Psoas muscle (tissue), 8 donors: ENCODE measurements at regions of chr12 and their contacts with region 1.

Region 1: DNA sequence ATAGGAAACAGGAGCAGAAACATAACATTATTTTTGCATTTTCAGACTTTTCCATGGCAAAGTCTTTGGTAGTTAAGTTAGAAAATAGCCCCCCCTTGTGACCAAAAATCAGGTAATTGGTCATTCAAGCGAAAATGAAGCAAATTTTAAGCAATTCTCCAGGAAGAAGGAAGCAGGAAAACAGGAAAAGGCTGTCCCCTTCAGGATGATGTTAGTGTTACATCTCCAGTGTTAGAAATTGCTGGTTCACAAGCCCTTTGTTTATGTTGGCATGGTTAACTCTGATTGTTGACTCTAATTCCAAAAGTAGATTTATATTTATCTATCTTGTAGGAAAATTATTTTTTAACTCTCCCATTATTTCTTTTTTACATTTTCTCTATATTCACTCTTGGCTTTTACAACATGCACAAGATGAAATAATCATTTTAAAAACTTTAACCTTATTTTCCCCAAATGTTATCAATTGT is 18.8 kb upstream of the GAS2L3 start:
- DNase-seq: no peak
- ATAC-seq: peak in 1 of 4 donors; percentile 55
- H3K4me3 ChIP-seq: no peak overlapping the region
- H3K27ac ChIP-seq: no peak overlapping the region
- H3K4me1 ChIP-seq: peaks cover 3% of the 10 kb centered on the region
- H3K27me3 ChIP-seq: no peaks in the 10 kb centered on the region
- CTCF ChIP-seq: peak; percentile 61

Region 2: GRCh38 chr12:100234598-100235304 is 319.9 kb before region 1 on chr12:
- intact Hi-C with region 1: loop called (anchors 5 to 10 kb)
- DNase-seq: no peak
- ATAC-seq: peak in 2 of 4 donors; percentile 48 to 71
- H3K4me3 ChIP-seq: no peak overlapping the region
- H3K27ac ChIP-seq: no peak overlapping the region
- H3K4me1 ChIP-seq: no peaks in the 10 kb centered on the region
- H3K27me3 ChIP-seq: no peaks in the 10 kb centered on the region
- CTCF ChIP-seq: peak; percentile 73

Region 3: GRCh38 chr12:100348657-100349454 is 205.8 kb before region 1 on chr12:
- intact Hi-C with region 1: loop called in 1 of 2 experiments (anchors 5 kb)
- DNase-seq: no peak
- ATAC-seq: no peak
- H3K4me3 ChIP-seq: no peak overlapping the region
- H3K27ac ChIP-seq: no peak overlapping the region
- H3K4me1 ChIP-seq: no peaks in the 10 kb centered on the region
- H3K27me3 ChIP-seq: no peaks in the 10 kb centered on the region
- CTCF ChIP-seq: peak; percentile 38

Region 4: GRCh38 chr12:100404769-100405407 is 149.8 kb before region 1 on chr12:
- intact Hi-C with region 1: no loop called
- DNase-seq: no peak
- ATAC-seq: no peak
- H3K4me3 ChIP-seq: no peak overlapping the region
- H3K27ac ChIP-seq: no peak overlapping the region
- H3K4me1 ChIP-seq: no peaks in the 10 kb centered on the region
- H3K27me3 ChIP-seq: no peaks in the 10 kb centered on the region
- CTCF ChIP-seq: peak; percentile 11

Region 5: GRCh38 chr12:100767950-100768349 is 213.3 kb after region 1 on chr12:
- intact Hi-C with region 1: no loop called
- DNase-seq: peak in 1 of 2 donors; percentile 39
- ATAC-seq: no peak
- H3K4me3 ChIP-seq: no peak overlapping the region
- H3K27ac ChIP-seq: no peak overlapping the region
- H3K4me1 ChIP-seq: no peaks in the 10 kb centered on the region
- H3K27me3 ChIP-seq: no peaks in the 10 kb centered on the region
- CTCF ChIP-seq: no peak